Left cardiac atrium (tissue), 4 donors: ENCODE measurements at regions of chrX and their contacts with region 1.

Region 1: GRCh38 chrX:116490104-116490503 is 27.3 kb upstream of the CT83 start:
- DNase-seq: no peak
- ATAC-seq: no peak

Region 2: DNA sequence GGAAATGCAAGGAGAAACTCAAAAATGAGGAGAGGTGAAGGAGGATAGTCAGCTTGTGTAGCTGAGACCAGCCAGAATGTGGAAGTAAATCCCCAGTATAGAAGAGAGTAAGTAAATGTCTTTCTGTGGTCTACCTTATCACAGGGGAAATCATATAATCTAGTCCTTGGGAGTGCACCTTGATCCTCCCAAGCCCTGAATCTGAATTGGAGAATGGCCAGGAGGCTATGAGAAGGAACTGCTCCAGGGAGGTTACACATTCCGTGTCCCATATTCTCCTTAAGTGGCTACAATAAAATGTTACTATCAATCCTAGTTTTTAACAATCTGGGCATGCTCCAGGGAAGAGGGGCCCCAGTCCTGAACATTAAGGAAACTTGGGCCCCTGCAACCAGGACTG is 308.8 kb before region 1 on chrX:
- intact Hi-C with region 1: no loop called
- DNase-seq: no peak
- ATAC-seq: no peak

Region 3: GRCh38 chrX:116427976-116428375 is 62.1 kb before region 1 on chrX:
- intact Hi-C with region 1: no loop called
- DNase-seq: no peak
- ATAC-seq: no peak

Region 4: GRCh38 chrX:116657071-116657470 is 167.0 kb after region 1 on chrX:
- intact Hi-C with region 1: no loop called
- DNase-seq: no peak
- ATAC-seq: no peak

Region 5: GRCh38 chrX:116806288-116806802 is 316.2 kb after region 1 on chrX:
- intact Hi-C with region 1: no loop called
- DNase-seq: no peak
- ATAC-seq: no peak

Region 6: GRCh38 chrX:118254611-118255010 is 1764.5 kb after region 1 on chrX:
- intact Hi-C with region 1: loop called in 1 of 2 experiments (anchors 10 kb)
- DNase-seq: no peak
- ATAC-seq: peak in 1 of 2 donors; percentile 53